Ovary (tissue), 10 donors: ENCODE measurements at regions of chr3 and their contacts with region 1.

Region 1: DNA sequence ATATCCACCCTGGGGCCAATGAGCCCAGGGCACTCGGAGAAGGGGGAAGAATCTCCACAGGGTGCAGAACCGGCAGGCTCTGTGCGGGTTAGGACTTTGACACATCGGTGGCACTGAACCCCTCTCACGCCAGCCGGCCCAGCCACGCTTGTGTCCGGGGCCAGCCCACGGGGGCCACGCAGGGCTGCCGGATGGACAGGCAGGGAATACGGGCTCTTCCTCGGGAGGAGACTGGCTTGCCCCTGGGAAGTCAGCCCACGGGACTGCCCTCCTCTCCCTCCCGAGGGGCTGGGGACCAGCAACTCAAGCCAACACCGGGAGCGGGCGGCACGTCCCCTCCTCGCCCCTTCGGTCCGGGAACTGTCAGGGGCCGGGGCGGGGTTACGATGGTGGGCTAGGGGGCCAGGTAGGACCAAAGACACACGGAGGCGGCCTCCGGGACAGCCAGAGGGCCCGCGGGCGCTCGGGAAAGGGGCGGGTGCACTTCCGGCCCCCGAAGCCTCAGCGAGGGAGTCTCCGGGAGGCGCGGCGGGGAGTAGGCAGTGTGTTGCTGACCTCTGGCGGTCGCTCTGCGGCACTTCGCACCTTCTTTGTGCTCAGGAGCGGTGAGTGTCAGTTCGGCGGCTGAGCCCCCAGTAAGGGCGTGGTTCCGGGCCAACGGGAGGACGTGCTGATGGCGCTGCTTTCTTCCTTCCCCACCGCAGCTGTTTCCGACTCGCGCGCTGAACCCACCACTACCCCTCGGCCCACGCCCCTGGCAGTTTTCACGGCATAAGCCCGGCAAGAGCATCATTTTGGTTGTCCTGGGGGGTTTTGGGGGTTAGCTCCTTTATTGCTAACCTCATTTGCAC is 5.1 kb upstream of the CYP8B1 start:
- DNase-seq: peak; percentile 80 to 88 (median 86)
- H3K4me3 ChIP-seq: peak overlapping the region; percentile 74
- H3K27ac ChIP-seq: peak overlapping the region; percentile 33 to 52
- H3K4me1 ChIP-seq: peaks cover 4% of the 10 kb centered on the region
- H3K27me3 ChIP-seq: no peaks in the 10 kb centered on the region
- CTCF ChIP-seq: peak; percentile 83 to 90 (median 88)
- EP300 ChIP-seq: no peak
- POLR2A ChIP-seq: no peak

Region 2: DNA sequence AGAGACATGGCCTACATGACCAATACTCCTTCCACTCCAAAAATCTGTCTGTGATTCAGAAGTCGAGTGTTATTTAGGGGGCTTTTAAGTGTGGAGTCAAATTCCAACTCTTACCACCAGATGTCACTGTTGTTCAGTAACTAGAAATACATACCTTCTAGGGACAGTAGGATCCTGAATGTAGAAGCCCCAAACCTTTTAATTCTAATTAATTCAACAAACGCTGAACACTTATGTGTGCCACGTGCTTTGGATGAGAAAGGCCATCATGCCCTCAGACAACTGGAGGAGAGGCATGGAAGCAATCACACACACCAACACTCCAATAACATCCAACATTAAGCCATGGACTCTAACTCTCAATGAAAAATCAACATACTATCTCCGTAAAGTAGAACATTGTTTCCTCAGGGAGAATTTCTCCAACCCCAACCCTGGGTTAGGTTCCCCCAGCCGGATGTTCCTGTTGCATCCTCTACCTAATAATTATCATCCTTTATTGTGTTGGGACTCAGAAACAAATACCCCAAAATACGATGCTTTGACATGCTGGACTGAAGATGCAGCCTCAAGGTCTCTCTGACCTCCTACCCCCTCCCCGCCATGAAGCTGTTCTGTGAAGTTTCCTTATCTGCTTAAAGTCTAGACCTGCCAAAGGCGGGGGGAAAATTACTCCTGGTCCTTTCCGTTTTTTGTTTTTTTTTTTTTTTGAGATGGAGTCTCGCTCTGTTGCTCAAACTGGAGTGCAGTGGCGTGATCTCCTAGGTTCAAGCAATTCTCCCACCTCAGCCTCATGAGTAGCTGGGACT is 99.7 kb before region 1 on chr3:
- intact Hi-C with region 1: loop called in 3 of 4 experiments (anchors 2 to 5 kb)
- DNase-seq: no peak
- H3K4me3 ChIP-seq: no peak overlapping the region
- H3K27ac ChIP-seq: no peak overlapping the region
- H3K4me1 ChIP-seq: no peaks in the 10 kb centered on the region
- H3K27me3 ChIP-seq: no peaks in the 10 kb centered on the region
- CTCF ChIP-seq: peak; percentile 58 to 78 (median 71)
- EP300 ChIP-seq: no peak
- POLR2A ChIP-seq: no peak

Region 3: GRCh38 chr3:42831321-42831713 is 49.5 kb before region 1 on chr3:
- intact Hi-C with region 1: loop called in 1 of 4 experiments (anchors 1 kb)
- DNase-seq: peak in 4 of 5 donors; percentile 23 to 67 (median 45)
- H3K4me3 ChIP-seq: no peak overlapping the region
- H3K27ac ChIP-seq: no peak overlapping the region
- H3K4me1 ChIP-seq: no peaks in the 10 kb centered on the region
- H3K27me3 ChIP-seq: no peaks in the 10 kb centered on the region
- CTCF ChIP-seq: peak in 2 of 3 donors; percentile 11 to 30
- EP300 ChIP-seq: no peak
- POLR2A ChIP-seq: no peak